ENCODE measurements at regions of chr1 and their contacts with region 1.

Region 1: DNA sequence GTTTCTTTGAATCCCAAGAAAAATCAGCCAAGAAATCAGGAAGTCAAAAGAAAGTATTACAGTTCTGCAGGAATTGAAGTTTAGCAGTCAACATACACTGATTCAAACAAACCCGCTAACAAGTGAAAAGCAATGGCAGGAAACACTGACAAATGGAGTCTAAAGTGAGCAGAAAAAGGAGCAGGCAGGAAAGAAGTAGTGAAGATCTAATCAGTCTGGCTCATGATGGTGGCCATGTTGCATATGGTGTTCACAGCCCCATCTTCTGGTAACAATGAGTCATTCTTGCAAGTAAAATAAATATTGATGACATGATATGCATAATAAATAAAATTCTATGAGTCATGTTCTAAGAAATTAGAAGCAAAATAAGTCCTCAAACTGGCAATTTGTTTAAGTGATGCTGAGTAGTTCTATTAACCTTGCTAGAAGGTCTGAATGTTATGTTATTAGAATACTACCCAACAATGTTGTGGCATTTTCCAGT is 5.5 kb upstream of the ACBD6 start:
- DNase-seq: no peak
- ATAC-seq: no peak

Region 2: GRCh38 chr1:180358649-180359048 is 149.2 kb before region 1 on chr1:
- intact Hi-C with region 1: no loop called
- DNase-seq: peak; percentile 69
- ATAC-seq: peak; percentile 50

Region 3: GRCh38 chr1:180527101-180527669 is 19.3 kb after region 1 on chr1:
- intact Hi-C with region 1: loop called (anchors 2 kb)
- DNase-seq: no peak
- ATAC-seq: no peak

Measured in Right ventricle myocardium inferior (tissue), 1 donor.